ENCODE measurements at regions of chr2 and their contacts with region 1.

Region 1: GRCh38 chr2:56077352-56077915 is 106.4 kb upstream of the CCDC85A start:
- DNase-seq: no peak
- ATAC-seq: no peak
- H3K4me3 Mint-ChIP-seq: no peak overlapping the region
- H3K27ac Mint-ChIP-seq: no peak overlapping the region
- H3K4me1 Mint-ChIP-seq: no peaks in the 10 kb centered on the region
- H3K27me3 Mint-ChIP-seq: no peaks in the 10 kb centered on the region
- CTCF ChIP-seq: no peak

Region 2: DNA sequence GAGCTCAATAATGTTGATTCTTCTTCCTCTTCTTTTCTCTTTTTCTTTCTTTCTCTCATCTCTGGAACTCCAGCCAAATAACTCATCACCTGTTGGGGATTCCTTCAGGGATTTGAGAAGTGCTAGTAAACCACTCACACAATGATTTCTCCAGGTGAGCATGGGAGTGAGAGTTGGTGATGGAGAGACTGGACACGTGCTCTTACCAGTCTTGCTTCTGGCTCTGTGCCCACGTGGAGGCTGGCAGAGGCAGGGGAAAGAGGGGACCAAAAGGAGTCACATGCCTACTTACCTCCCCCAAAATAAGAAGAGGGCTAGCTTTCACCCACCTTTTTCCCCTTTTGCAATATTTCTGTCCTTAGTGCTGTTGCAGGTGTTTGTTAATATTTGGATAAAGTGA is 77.8 kb after region 1 on chr2:
- CTCF ChIA-PET with region 1: no interaction called
- POLR2A ChIA-PET with region 1: interaction called, 10 read pairs
- intact Hi-C with region 1: no loop called
- DNase-seq: no peak
- ATAC-seq: no peak
- H3K4me3 Mint-ChIP-seq: no peak overlapping the region
- H3K27ac Mint-ChIP-seq: no peak overlapping the region
- H3K4me1 Mint-ChIP-seq: no peaks in the 10 kb centered on the region
- H3K27me3 Mint-ChIP-seq: peaks cover 2% of the 10 kb centered on the region
- CTCF ChIP-seq: no peak